Activated T-helper 1 cell treated with anti-CD3 and anti-CD28 coated beads, Interleukin-12 subunit alpha, Interleukin-12 subunit beta, Interleukin-2, Interleukin-4 antibody, amounts not matched to agents 30 ng/mL and 10 ng/mL and 1 ng/mL, durations not matched to agents 14 hours and 24 hours and 36 hours (primary cell): ENCODE measurements at regions of chr10 and their contacts with region 1.

Region 1: GRCh38 chr10:130179640-130180039 is 43.4 kb downstream of the GLRX3 start:
- DNase-seq: peak; percentile 40
- H3K4me3 Mint-ChIP-seq: no peak overlapping the region
- H3K27ac Mint-ChIP-seq: peak overlapping the region; percentile 40
- H3K4me1 Mint-ChIP-seq: peaks cover 17% of the 10 kb centered on the region
- H3K27me3 Mint-ChIP-seq: no peaks in the 10 kb centered on the region

Region 2: GRCh38 chr10:129971381-129972144 is 208.1 kb before region 1 on chr10:
- intact Hi-C with region 1: loop called (anchors 1 kb)
- DNase-seq: no peak
- H3K4me3 Mint-ChIP-seq: peak overlapping the region; percentile 58
- H3K27ac Mint-ChIP-seq: peak overlapping the region; percentile 88
- H3K4me1 Mint-ChIP-seq: peaks cover 13% of the 10 kb centered on the region
- H3K27me3 Mint-ChIP-seq: peaks cover 38% of the 10 kb centered on the region

Region 3: GRCh38 chr10:130136226-130137089 is 43.2 kb before region 1 on chr10 and contains the start of gene GLRX3:
- intact Hi-C with region 1: loop called (anchors 1 kb)
- DNase-seq: peak; percentile 85
- H3K4me3 Mint-ChIP-seq: peak within 1 kb of the TSS; percentile 90
- H3K27ac Mint-ChIP-seq: peak within 1 kb of the TSS; percentile 84
- H3K4me1 Mint-ChIP-seq: peaks cover 53% of the 10 kb centered on the region
- H3K27me3 Mint-ChIP-seq: peaks cover 13% of the 10 kb centered on the region
- total RNA-seq, gene GLRX3: 119 and 129 TPM in 2 replicates

Region 4: GRCh38 chr10:130190055-130190736 is 10.6 kb after region 1 on chr10:
- intact Hi-C with region 1: loop called (anchors 1 kb)
- DNase-seq: peak; percentile 83
- H3K4me3 Mint-ChIP-seq: no peak overlapping the region
- H3K27ac Mint-ChIP-seq: no peak overlapping the region
- H3K4me1 Mint-ChIP-seq: no peaks in the 10 kb centered on the region
- H3K27me3 Mint-ChIP-seq: peaks cover 9% of the 10 kb centered on the region

Region 5: DNA sequence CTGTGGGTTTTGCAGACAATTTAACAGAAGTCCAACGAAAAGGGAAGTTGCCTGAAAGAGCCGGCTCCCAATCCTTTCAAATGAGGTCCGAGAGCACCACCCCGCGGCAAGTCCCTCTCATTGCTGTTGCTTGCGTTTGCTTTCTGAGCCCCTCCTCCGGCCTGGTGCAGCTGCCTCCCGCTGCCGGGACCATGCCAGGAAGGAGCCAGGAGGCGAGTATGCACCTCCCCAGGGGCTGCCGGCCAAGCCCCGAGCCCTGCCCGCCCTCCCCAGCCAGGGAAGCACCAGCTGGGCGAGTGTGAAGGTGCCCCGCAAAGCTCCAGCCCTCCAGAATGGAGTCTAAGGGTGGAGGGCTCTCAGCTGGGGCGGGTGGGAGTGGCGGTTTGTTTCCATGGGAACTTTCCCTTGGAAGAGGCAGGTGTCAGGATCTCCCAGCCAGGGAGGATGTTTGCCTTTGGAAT is 1695.4 kb after region 1 on chr10:
- intact Hi-C with region 1: loop called (anchors 5 kb)
- DNase-seq: peak; percentile 25
- H3K4me3 Mint-ChIP-seq: no peak overlapping the region
- H3K27ac Mint-ChIP-seq: no peak overlapping the region
- H3K4me1 Mint-ChIP-seq: no peaks in the 10 kb centered on the region
- H3K27me3 Mint-ChIP-seq: peaks cover 10% of the 10 kb centered on the region